Mammary epithelial cell (primary cell): ENCODE measurements at regions of chr2 and their contacts with region 1.

Region 1: GRCh38 chr2:147331790-147332419 is 512.9 kb upstream of the ACVR2A start:
- DNase-seq: peak; percentile 42
- H3K4me3 ChIP-seq: no peak overlapping the region
- H3K27ac ChIP-seq: no peak overlapping the region
- H3K4me1 ChIP-seq: no peaks in the 10 kb centered on the region
- H3K27me3 ChIP-seq: no peaks in the 10 kb centered on the region
- CTCF ChIP-seq: peak; percentile 61 to 73

Region 2: GRCh38 chr2:147045113-147045512 is 286.8 kb before region 1 on chr2:
- CTCF ChIA-PET with region 1: interaction called, 3 read pairs
- dilution Hi-C with region 1: no loop called
- in situ Hi-C with region 1: no loop called
- intact Hi-C with region 1: loop called (anchors 1 kb)
- DNase-seq: peak; percentile 69
- H3K4me3 ChIP-seq: no peak overlapping the region
- H3K27ac ChIP-seq: no peak overlapping the region
- H3K4me1 ChIP-seq: no peaks in the 10 kb centered on the region
- H3K27me3 ChIP-seq: no peaks in the 10 kb centered on the region
- CTCF ChIP-seq: peak; percentile 63 to 78

Region 3: DNA sequence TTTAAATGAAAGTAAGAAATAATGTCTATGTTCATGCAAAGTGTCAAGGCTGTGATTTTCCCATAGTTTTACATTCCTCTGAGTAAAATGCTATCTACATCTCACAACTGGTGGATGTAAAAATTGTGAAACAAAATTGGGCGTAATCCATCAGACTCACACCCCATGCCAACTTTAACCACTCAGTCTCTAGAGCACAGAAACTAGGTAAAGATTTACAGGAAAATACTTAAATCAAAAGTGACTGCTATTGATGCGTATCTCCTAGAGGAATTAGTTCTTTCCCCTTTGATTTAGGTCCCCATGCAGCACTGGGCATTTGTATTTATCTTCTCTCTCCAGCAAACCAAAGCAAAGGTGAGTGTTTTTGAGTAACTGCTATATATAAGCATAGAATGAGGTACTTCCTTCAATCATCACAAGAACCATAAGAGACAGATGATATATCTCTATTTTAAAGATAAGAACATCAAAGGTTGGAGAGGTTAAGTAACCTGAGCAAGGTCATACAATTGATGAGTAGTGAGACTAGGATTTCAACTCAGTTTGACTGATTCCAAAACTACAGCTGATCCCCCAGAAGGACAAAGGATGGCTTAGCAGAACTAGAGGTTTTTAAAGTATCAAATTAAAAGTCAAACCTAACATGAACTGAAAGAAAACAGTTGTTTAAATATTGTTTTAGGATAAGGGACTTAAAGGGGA is 81.1 kb before region 1 on chr2:
- CTCF ChIA-PET with region 1: interaction called, 12 read pairs
- dilution Hi-C with region 1: no loop called
- in situ Hi-C with region 1: no loop called
- intact Hi-C with region 1: no loop called
- DNase-seq: no peak
- H3K4me3 ChIP-seq: no peak overlapping the region
- H3K27ac ChIP-seq: no peak overlapping the region
- H3K4me1 ChIP-seq: no peaks in the 10 kb centered on the region
- H3K27me3 ChIP-seq: no peaks in the 10 kb centered on the region
- CTCF ChIP-seq: no peak